CD4-positive, alpha-beta T cell (primary cell): ENCODE measurements at regions of chr3 and their contacts with region 1.

Region 1: DNA sequence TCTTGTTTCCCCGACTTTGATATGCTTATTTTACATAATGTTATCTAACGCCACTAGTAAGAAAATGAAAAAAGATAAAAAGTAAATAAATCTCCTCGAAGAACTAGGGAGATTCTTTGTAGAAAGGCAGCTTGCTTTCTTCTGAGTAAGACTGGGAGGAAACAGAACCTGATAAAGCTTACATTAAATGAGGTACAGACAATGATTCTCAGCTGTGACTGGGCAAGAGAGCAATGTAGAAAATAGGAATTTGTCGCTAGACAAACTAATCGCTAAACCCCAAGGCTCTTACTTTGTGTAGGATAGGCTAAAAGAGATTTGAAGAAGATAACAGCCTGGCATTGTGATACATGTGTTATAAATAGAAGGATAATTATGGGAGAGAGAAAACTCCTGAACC is 919.0 kb upstream of the ALCAM start:
- DNase-seq: no peak
- ATAC-seq: no peak
- H3K4me3 ChIP-seq: no peak overlapping the region
- H3K4me3 Mint-ChIP-seq: no peak overlapping the region
- H3K27ac ChIP-seq: no peak overlapping the region
- H3K27ac Mint-ChIP-seq: no peak overlapping the region
- H3K4me1 ChIP-seq: no peaks in the 10 kb centered on the region
- H3K4me1 Mint-ChIP-seq: no peaks in the 10 kb centered on the region
- H3K27me3 ChIP-seq: no peaks in the 10 kb centered on the region
- H3K27me3 Mint-ChIP-seq: no peaks in the 10 kb centered on the region
- CTCF ChIP-seq: no peak

Region 2: DNA sequence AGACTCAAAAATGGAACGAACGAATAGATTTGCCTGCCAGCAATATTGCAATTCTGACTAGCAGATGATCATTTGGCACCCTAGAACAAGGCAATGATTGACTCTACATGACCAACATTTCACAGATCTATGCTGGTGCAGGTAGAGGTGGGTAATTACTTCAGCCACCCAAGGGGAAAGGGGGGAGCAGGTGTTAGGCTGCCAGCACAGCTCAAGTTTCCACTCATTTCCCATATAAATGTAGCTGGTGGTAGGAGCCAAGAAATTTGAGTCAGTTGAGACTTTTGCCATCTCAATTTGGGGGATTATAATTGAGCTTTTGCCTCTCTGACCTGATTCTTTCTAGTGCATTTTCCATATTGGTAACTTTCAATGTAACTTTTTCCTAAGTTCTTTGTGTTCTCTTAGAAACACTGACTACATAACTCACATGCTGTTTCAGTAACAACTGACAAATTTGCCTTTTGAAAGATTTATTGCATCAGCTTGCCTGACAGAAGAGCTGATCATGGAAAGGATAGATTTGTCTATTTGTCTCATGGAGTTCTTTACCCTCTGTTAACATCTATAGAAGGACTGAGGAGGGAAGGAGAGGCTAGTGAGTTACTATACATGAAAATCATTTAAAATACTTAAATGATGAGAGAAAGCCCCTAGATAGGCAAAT is 1110.4 kb before region 1 on chr3:
- CTCF ChIA-PET with region 1: no interaction called
- POLR2A ChIA-PET with region 1: no interaction called
- intact Hi-C with region 1: no loop called
- DNase-seq: no peak
- ATAC-seq: no peak
- H3K4me3 ChIP-seq: no peak overlapping the region
- H3K4me3 Mint-ChIP-seq: no peak overlapping the region
- H3K27ac ChIP-seq: no peak overlapping the region
- H3K27ac Mint-ChIP-seq: no peak overlapping the region
- H3K4me1 ChIP-seq: no peaks in the 10 kb centered on the region
- H3K4me1 Mint-ChIP-seq: no peaks in the 10 kb centered on the region
- H3K27me3 ChIP-seq: no peaks in the 10 kb centered on the region
- H3K27me3 Mint-ChIP-seq: no peaks in the 10 kb centered on the region
- CTCF ChIP-seq: no peak

Region 3: GRCh38 chr3:104388619-104389018 is 59.1 kb before region 1 on chr3:
- CTCF ChIA-PET with region 1: no interaction called
- POLR2A ChIA-PET with region 1: no interaction called
- intact Hi-C with region 1: loop called in 1 of 2 experiments (anchors 1 kb)
- DNase-seq: no peak
- ATAC-seq: no peak
- H3K4me3 ChIP-seq: no peak overlapping the region
- H3K4me3 Mint-ChIP-seq: no peak overlapping the region
- H3K27ac ChIP-seq: no peak overlapping the region
- H3K27ac Mint-ChIP-seq: no peak overlapping the region
- H3K4me1 ChIP-seq: no peaks in the 10 kb centered on the region
- H3K4me1 Mint-ChIP-seq: no peaks in the 10 kb centered on the region
- H3K27me3 ChIP-seq: no peaks in the 10 kb centered on the region
- H3K27me3 Mint-ChIP-seq: no peaks in the 10 kb centered on the region
- CTCF ChIP-seq: no peak